ENCODE measurements at regions of chr10 and their contacts with region 1.

Region 1: DNA sequence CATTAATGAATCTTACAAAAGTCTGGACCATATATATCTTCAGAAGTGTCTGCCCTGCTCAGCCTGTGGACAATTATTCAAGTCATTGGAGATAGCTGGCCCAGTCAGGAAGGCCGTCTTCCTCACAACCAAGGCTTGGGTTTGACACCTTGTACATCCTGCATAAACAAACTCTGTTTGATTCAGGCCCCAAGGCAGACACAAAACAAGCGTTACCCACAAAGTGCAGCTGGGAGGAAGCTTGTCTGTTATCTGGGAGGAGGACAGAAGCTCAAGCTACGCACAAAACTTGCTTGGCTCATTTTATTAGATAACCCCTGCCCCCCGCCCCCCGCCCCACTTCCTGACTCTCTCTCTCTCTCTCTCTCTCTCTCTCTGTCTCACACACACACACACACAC is 166.9 kb upstream of the WDR11 start:
- DNase-seq: no peak
- H3K4me3 Mint-ChIP-seq: no peak overlapping the region
- H3K27ac Mint-ChIP-seq: no peak overlapping the region
- H3K4me1 Mint-ChIP-seq: no peaks in the 10 kb centered on the region
- H3K27me3 Mint-ChIP-seq: no peaks in the 10 kb centered on the region
- CTCF ChIP-seq: no peak

Region 2: GRCh38 chr10:120657371-120657770 is 26.9 kb before region 1 on chr10:
- CTCF ChIA-PET with region 1: interaction called, 10 read pairs
- intact Hi-C with region 1: no loop called
- DNase-seq: no peak
- H3K4me3 Mint-ChIP-seq: no peak overlapping the region
- H3K27ac Mint-ChIP-seq: no peak overlapping the region
- H3K4me1 Mint-ChIP-seq: no peaks in the 10 kb centered on the region
- H3K27me3 Mint-ChIP-seq: peaks cover 18% of the 10 kb centered on the region
- CTCF ChIP-seq: no peak

Region 3: GRCh38 chr10:120735773-120736371 is 51.6 kb after region 1 on chr10:
- CTCF ChIA-PET with region 1: no interaction called
- intact Hi-C with region 1: no loop called
- DNase-seq: no peak
- H3K4me3 Mint-ChIP-seq: no peak overlapping the region
- H3K27ac Mint-ChIP-seq: no peak overlapping the region
- H3K4me1 Mint-ChIP-seq: peaks cover 14% of the 10 kb centered on the region
- H3K27me3 Mint-ChIP-seq: peaks cover 25% of the 10 kb centered on the region
- CTCF ChIP-seq: peak; percentile 46